ENCODE measurements at regions of chr11 and their contacts with region 1.

Region 1: GRCh38 chr11:10540923-10541560 is at the start of gene RNF141:
- DNase-seq: peak; percentile 86 to 100
- H3K4me3 ChIP-seq: peak within 1 kb of the TSS; percentile 73 to 93 (median 87)
- H3K27ac ChIP-seq: peak within 1 kb of the TSS; percentile 63
- H3K4me1 ChIP-seq: peaks cover 0 to 6% (median 0%) of the 10 kb centered on the region in 4 experiments; a peak in 2 of 7 replicates
- H3K27me3 ChIP-seq: no peaks in the 10 kb centered on the region
- CTCF ChIP-seq: peak; percentile 73 to 90 (median 82)
- EP300 ChIP-seq: peak in 1 of 2 experiments; percentile 52; a peak in 1 of 3 replicates
- POLR2A ChIP-seq: peak; percentile 91 to 96
- RAD21 ChIP-seq: peak; percentile 51 to 58; a peak in 3 of 4 replicates
- total RNA-seq, gene RNF141: 20.9 and 22.8 TPM in 2 replicates

Region 2: GRCh38 chr11:10197091-10197490 is 344.0 kb before region 1 on chr11:
- CTCF ChIA-PET with region 1: no interaction called
- POLR2A ChIA-PET with region 1: no interaction called
- DNase-seq: no peak
- H3K4me3 ChIP-seq: no peak overlapping the region
- H3K27ac ChIP-seq: no peak overlapping the region
- H3K4me1 ChIP-seq: peaks cover 0 to 2% (median under 1%) of the 10 kb centered on the region in 4 experiments; a peak in 2 of 7 replicates
- H3K27me3 ChIP-seq: no peaks in the 10 kb centered on the region
- CTCF ChIP-seq: no peak
- EP300 ChIP-seq: no peak
- POLR2A ChIP-seq: no peak
- RAD21 ChIP-seq: no peak

Region 3: GRCh38 chr11:10478574-10479550 is 62.2 kb before region 1 on chr11:
- CTCF ChIA-PET with region 1: no interaction called
- POLR2A ChIA-PET with region 1: no interaction called
- DNase-seq: no peak
- H3K4me3 ChIP-seq: no peak overlapping the region
- H3K27ac ChIP-seq: no peak overlapping the region
- H3K4me1 ChIP-seq: no peaks in the 10 kb centered on the region
- H3K27me3 ChIP-seq: no peaks in the 10 kb centered on the region
- CTCF ChIP-seq: no peak
- EP300 ChIP-seq: no peak
- POLR2A ChIP-seq: no peak
- RAD21 ChIP-seq: no peak

Region 4: GRCh38 chr11:10511046-10511711 is 29.9 kb before region 1 on chr11:
- CTCF ChIA-PET with region 1: interaction called, 10 read pairs
- POLR2A ChIA-PET with region 1: interaction called, 5 read pairs
- DNase-seq: peak; percentile 43 to 45
- H3K4me3 ChIP-seq: peak overlapping the region in 1 of 4 experiments; percentile 11; a peak in 1 of 8 replicates
- H3K27ac ChIP-seq: no peak overlapping the region
- H3K4me1 ChIP-seq: peaks cover 2 to 7% (median 6%) of the 10 kb centered on the region in 4 experiments; a peak in 4 of 7 replicates
- H3K27me3 ChIP-seq: no peaks in the 10 kb centered on the region
- CTCF ChIP-seq: no peak
- EP300 ChIP-seq: no peak
- POLR2A ChIP-seq: no peak
- RAD21 ChIP-seq: no peak

Region 5: DNA sequence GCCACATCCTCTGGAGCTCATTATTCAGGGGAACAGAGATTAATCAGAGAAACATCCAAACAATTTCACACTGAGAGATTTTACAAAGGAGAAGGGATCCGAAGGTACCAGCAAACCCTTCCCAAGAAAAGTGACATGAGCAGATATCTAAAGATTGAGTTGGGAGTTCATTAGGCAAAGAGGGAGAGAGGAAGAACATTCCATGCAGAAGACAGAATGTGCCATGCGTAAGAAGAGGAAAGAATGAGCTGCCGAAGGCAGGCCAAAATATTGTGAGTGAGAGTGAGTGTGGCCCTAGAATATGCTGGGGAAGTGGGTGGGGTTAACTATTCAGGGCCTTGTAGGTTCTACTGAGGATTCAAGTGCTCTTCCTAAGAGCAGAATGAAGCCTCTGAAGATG is 77.4 kb after region 1 on chr11:
- CTCF ChIA-PET with region 1: interaction called, 12 read pairs
- POLR2A ChIA-PET with region 1: no interaction called
- DNase-seq: no peak
- H3K4me3 ChIP-seq: no peak overlapping the region
- H3K27ac ChIP-seq: no peak overlapping the region
- H3K4me1 ChIP-seq: no peaks in the 10 kb centered on the region
- H3K27me3 ChIP-seq: no peaks in the 10 kb centered on the region
- CTCF ChIP-seq: no peak
- EP300 ChIP-seq: no peak
- POLR2A ChIP-seq: no peak
- RAD21 ChIP-seq: no peak

Region 6: DNA sequence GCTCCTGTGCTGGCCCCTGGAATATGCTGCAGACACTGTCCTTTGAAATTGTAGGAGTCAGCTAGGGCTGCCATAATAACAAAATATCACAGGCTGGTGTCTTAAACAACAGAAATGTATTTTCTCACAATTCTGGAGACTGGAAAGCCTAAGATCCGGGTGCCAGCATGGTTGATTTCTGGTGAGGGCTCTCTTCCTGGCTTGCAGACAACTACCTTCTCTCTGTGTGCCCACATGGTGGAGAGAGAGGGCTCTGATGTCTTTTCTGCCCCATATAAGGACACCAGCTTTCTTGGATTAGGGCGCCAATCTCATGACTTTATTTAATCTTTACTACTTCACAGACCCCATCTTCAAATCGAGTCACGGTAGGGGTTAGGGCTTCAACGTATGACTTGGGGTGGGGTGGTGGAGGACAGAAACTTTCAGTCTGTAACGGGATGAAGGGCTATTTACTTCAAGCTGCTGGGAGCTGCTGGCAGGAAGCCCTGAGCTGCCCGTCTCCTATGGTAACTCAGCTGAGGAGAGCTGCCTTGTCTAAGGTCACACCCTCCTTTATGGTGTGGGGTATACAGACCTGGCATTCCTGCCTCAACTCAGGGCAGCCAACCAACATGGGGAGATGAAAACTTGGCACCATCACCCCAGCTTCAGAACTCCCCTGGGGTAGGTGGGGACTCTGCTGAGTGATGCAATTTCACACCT is 459.7 kb after region 1 on chr11:
- CTCF ChIA-PET with region 1: no interaction called
- POLR2A ChIA-PET with region 1: no interaction called
- DNase-seq: no peak
- H3K4me3 ChIP-seq: no peak overlapping the region
- H3K27ac ChIP-seq: no peak overlapping the region
- H3K4me1 ChIP-seq: no peaks in the 10 kb centered on the region
- H3K27me3 ChIP-seq: no peaks in the 10 kb centered on the region; a peak in 1 of 7 replicates
- CTCF ChIP-seq: no peak
- EP300 ChIP-seq: no peak
- POLR2A ChIP-seq: no peak
- RAD21 ChIP-seq: no peak